OCI-LY7 (cell line): ENCODE measurements at regions of chr12 and their contacts with region 1.

Region 1: GRCh38 chr12:109839444-109839843 is 6.2 kb upstream of the TRPV4 start:
- DNase-seq: no peak
- H3K4me3 ChIP-seq: no peak overlapping the region
- H3K27ac ChIP-seq: no peak overlapping the region
- H3K4me1 ChIP-seq: no peaks in the 10 kb centered on the region
- CTCF ChIP-seq: no peak

Region 2: GRCh38 chr12:109811624-109811995 is 27.8 kb before region 1 on chr12:
- CTCF ChIA-PET with region 1: no interaction called
- POLR2A ChIA-PET with region 1: no interaction called
- intact Hi-C with region 1: no loop called
- DNase-seq: no peak
- H3K4me3 ChIP-seq: no peak overlapping the region
- H3K27ac ChIP-seq: no peak overlapping the region
- H3K4me1 ChIP-seq: no peaks in the 10 kb centered on the region
- CTCF ChIP-seq: no peak

Region 3: GRCh38 chr12:109888179-109889020 is 49.0 kb after region 1 on chr12:
- CTCF ChIA-PET with region 1: no interaction called
- POLR2A ChIA-PET with region 1: interaction called, 10 read pairs
- intact Hi-C with region 1: no loop called
- DNase-seq: peak; percentile 69
- H3K4me3 ChIP-seq: peak overlapping the region; percentile 6
- H3K27ac ChIP-seq: peak overlapping the region; percentile 68
- H3K4me1 ChIP-seq: peaks cover 37% of the 10 kb centered on the region
- CTCF ChIP-seq: no peak